Testis (tissue), 5 donors: ENCODE measurements at regions of chr1 and their contacts with region 1.

Region 1: DNA sequence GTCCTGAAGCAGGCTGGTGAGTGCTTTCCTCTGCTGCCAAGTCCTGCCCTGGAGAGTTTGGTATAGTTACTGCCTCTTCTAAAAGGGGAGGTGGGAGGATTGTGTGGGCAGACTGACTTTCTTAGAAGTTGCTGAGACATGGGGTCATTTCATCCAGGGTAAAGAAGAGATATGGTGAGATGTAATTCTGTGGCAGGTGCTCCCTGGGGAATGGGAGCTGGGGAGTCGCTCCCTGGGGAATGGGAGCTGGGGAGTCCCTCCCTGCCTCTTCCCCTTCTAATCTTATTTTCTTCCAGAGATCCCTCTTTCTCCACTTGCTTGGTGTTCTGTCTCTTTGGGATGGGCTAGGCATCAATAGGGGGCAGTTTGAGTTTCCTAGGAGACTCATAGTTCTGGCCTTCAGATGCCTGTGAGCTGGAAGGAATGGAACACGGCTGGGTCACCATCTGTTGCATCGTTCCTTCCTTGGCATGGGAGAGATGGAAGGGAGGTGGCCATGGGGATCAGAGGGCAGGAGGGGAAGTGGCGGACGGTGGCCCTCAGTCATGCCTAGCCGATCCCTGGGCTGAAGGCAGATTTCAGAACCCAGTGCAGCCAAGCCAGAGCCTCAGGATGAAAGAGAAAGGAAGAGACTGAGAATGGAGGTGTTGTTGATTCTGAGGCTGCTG is 59.0 kb downstream of the NFASC start:
- DNase-seq: no peak
- H3K4me3 ChIP-seq: no peak overlapping the region
- H3K27ac ChIP-seq: no peak overlapping the region
- H3K4me1 ChIP-seq: no peaks in the 10 kb centered on the region
- H3K27me3 ChIP-seq: no peaks in the 10 kb centered on the region
- CTCF ChIP-seq: no peak
- POLR2A ChIP-seq: no peak

Region 2: GRCh38 chr1:204837440-204838084 is 92.1 kb before region 1 on chr1:
- intact Hi-C with region 1: loop called (anchors 10 kb)
- DNase-seq: peak; percentile 58
- H3K4me3 ChIP-seq: no peak overlapping the region
- H3K27ac ChIP-seq: no peak overlapping the region
- H3K4me1 ChIP-seq: no peaks in the 10 kb centered on the region
- H3K27me3 ChIP-seq: no peaks in the 10 kb centered on the region
- CTCF ChIP-seq: no peak
- POLR2A ChIP-seq: no peak

Region 3: DNA sequence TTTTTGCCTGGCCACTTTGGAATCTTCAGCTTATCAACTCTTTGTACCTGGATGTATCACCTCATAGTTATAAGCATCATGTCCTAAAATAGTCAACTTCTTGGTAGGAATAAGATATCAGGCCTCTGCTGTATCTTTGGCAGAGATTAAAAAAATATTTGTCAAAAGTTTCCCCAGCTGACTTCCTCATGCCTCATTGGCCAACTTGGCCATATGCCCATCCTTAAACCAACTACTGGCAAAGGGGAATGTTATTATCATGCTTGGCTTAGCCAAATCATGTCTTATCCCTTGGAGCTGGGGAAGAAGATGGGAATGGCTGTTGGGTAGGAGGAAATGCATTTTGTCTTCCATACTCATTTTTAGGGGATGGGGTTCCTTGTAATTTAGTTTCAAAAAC is 35.6 kb before region 1 on chr1:
- intact Hi-C with region 1: no loop called
- DNase-seq: no peak
- H3K4me3 ChIP-seq: no peak overlapping the region
- H3K27ac ChIP-seq: no peak overlapping the region
- H3K4me1 ChIP-seq: no peaks in the 10 kb centered on the region
- H3K27me3 ChIP-seq: no peaks in the 10 kb centered on the region
- CTCF ChIP-seq: no peak
- POLR2A ChIP-seq: no peak